Heart right ventricle (tissue), 16 donors: ENCODE measurements at regions of chr21 and their contacts with region 1.

Region 1: GRCh38 chr21:28235169-28235895 is 757.3 kb downstream of the LTN1 start:
- DNase-seq: peak in 1 of 2 donors; percentile 5
- ATAC-seq: peak in 6 of 8 donors; percentile 30 to 53 (median 46)
- H3K4me3 ChIP-seq: no peak overlapping the region
- H3K27ac ChIP-seq: peak overlapping the region in 1 of 10 donors; percentile 42
- H3K4me1 ChIP-seq: peaks cover 0 to 37% (median 13%) of the 10 kb centered on the region in 9 donors
- H3K27me3 ChIP-seq: no peaks in the 10 kb centered on the region
- CTCF ChIP-seq: peak in 6 of 9 donors; percentile 8 to 29 (median 18)

Region 2: GRCh38 chr21:28099001-28099705 is 136.2 kb before region 1 on chr21:
- intact Hi-C with region 1: loop called in 1 of 10 experiments (anchors 10 kb)
- DNase-seq: peak; percentile 29 to 69
- ATAC-seq: peak; percentile 92 to 99 (median 95)
- H3K4me3 ChIP-seq: no peak overlapping the region
- H3K27ac ChIP-seq: peak overlapping the region in 5 of 10 donors; percentile 11 to 71 (median 53)
- H3K4me1 ChIP-seq: peaks cover 0 to 28% (median 7%) of the 10 kb centered on the region in 9 donors
- H3K27me3 ChIP-seq: no peaks in the 10 kb centered on the region
- CTCF ChIP-seq: no peak

Region 3: GRCh38 chr21:28294051-28294450 is 58.7 kb after region 1 on chr21:
- intact Hi-C with region 1: no loop called
- DNase-seq: no peak
- ATAC-seq: no peak
- H3K4me3 ChIP-seq: no peak overlapping the region
- H3K27ac ChIP-seq: no peak overlapping the region
- H3K4me1 ChIP-seq: no peaks in the 10 kb centered on the region
- H3K27me3 ChIP-seq: no peaks in the 10 kb centered on the region
- CTCF ChIP-seq: no peak